Activated CD8-positive, alpha-beta T cell treated with anti-CD3 and anti-CD28 coated beads, Interleukin-2, amount 10 ng/mL, durations not matched to agents 7 days and 5 days (primary cell): ENCODE measurements at regions of chr4 and their contacts with region 1.

Region 1: DNA sequence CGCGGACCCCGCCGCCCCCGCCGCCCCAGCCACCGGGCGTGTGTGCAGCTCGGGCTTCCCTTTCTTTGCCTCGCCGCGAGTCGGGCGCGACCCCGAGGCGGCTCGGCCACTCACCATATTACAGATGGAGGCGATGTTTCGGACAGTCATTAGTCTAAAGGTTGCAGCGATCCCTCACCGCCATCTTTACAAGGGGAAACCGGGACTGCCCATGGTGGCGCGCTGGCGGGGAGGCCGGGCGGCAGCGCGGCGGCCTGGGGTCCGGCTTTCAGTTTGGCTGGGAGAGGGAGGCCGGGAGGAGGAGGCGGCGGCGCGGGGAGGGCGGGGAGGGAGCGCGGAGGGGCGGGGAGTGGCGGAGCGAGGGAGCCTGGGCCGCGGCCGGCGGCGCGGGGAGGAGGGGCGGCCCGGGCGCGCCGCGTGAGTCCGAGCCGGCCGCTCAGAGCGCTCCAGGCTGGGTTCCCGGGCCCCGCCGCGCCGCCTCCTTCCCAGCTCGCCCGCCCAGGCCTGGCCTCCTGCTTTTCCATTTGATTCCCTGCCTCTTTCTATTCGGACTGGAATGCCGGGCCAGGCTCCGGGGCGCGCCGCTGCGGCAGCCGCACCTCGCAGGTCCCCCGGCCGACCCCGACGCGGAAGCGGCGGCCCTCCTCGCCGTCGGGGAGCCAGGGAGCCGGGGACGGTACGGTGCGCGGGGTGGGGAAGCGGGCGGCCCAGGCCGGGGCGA is at the start of gene USP46:
- DNase-seq: peak; percentile 52
- ATAC-seq: peak; percentile 89
- H3K4me3 Mint-ChIP-seq: peak within 1 kb of the TSS; percentile 75
- H3K27ac Mint-ChIP-seq: peak within 1 kb of the TSS; percentile 73
- H3K4me1 Mint-ChIP-seq: peaks cover 14% of the 10 kb centered on the region
- H3K27me3 Mint-ChIP-seq: peaks cover 19% of the 10 kb centered on the region
- total RNA-seq, gene USP46: 3.8 to 4.6 TPM

Region 2: DNA sequence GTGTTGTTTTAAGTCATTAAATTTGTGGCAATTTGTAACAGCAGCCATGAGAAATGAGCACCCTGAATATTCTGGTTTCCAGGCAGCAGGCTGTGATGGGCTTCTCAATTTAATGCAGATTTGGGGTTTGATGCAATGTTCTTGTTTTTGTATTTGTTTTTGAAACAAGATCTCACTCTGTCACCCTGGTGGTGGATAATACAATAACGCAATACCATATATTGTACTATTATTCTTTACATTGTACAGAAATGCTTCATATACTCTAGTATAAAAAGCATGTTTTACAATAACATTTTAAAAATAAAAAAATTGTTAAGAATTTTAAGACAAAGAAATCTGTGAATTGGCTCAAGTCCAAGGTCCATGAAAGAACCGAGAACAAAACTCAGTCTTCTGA is 129.2 kb before region 1 on chr4:
- CTCF ChIA-PET with region 1: no interaction called
- POLR2A ChIA-PET with region 1: no interaction called
- DNase-seq: no peak
- ATAC-seq: no peak
- H3K4me3 Mint-ChIP-seq: no peak overlapping the region
- H3K27ac Mint-ChIP-seq: no peak overlapping the region
- H3K4me1 Mint-ChIP-seq: no peaks in the 10 kb centered on the region
- H3K27me3 Mint-ChIP-seq: no peaks in the 10 kb centered on the region

Region 3: DNA sequence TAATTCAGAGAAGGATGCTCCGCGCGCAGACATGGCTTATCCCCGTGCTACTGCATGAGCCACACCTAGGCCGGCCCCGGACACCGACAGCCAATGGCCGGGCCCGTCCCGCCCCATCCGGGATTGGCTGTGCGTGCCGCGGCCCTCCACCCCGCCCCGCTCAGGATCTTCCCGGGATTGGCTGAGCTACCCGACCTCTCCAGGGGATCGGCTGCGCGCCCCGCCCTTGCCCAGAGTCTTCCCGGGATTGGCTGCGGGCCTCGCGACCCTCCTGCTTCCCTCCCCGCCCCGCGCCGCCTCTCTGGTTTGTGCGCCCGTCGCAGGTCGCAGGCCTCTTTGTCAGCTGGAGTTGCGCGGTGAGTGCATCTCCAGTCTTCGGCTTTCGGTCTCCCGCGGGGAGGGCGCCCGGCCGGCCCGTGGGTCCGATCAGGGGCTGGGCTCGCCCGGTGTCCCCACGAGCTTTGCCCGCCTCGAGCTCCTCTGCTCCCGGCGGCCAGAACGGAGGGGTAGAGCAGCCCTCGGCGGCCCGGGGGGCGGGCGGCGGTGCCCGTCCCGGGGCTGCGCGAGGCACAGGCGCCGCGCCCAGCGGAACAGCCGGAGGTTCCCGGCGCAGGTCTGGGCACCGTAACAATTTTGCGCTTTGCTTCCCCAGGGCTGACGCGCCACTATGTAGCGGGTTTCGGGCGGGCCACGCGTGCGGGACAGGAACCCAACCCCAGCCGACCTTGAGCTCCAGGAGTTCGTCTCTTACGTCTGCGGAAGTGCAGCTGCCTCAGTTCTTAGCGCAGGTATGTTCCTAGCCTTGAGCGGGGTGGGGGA is 53.2 kb after region 1 on chr4:
- CTCF ChIA-PET with region 1: no interaction called
- POLR2A ChIA-PET with region 1: interaction called, 25 read pairs
- DNase-seq: peak; percentile 98
- ATAC-seq: peak; percentile 97
- H3K4me3 Mint-ChIP-seq: peak overlapping the region; percentile 95
- H3K27ac Mint-ChIP-seq: peak overlapping the region; percentile 97
- H3K4me1 Mint-ChIP-seq: peaks cover 46% of the 10 kb centered on the region
- H3K27me3 Mint-ChIP-seq: peaks cover 8% of the 10 kb centered on the region